CD8-positive, alpha-beta T cell (primary cell): ENCODE measurements at regions of chr12 and their contacts with region 1.

Region 1: GRCh38 chr12:1706633-1706981 is 15.7 kb downstream of the ADIPOR2 start:
- DNase-seq: no peak
- ATAC-seq: no peak
- H3K4me3 ChIP-seq: no peak overlapping the region
- H3K4me3 Mint-ChIP-seq: no peak overlapping the region
- H3K27ac ChIP-seq: no peak overlapping the region
- H3K27ac Mint-ChIP-seq: no peak overlapping the region
- H3K4me1 ChIP-seq: no peaks in the 10 kb centered on the region
- H3K4me1 Mint-ChIP-seq: peaks cover 70% of the 10 kb centered on the region
- H3K27me3 ChIP-seq: no peaks in the 10 kb centered on the region
- H3K27me3 Mint-ChIP-seq: no peaks in the 10 kb centered on the region
- CTCF ChIP-seq: no peak

Region 2: GRCh38 chr12:1744932-1745331 is 38.3 kb after region 1 on chr12:
- CTCF ChIA-PET with region 1: no interaction called
- POLR2A ChIA-PET with region 1: no interaction called
- intact Hi-C with region 1: loop called in 1 of 2 experiments (anchors 5 kb)
- DNase-seq: no peak
- ATAC-seq: no peak
- H3K4me3 ChIP-seq: no peak overlapping the region
- H3K4me3 Mint-ChIP-seq: no peak overlapping the region
- H3K27ac ChIP-seq: no peak overlapping the region
- H3K27ac Mint-ChIP-seq: no peak overlapping the region
- H3K4me1 ChIP-seq: peaks cover 15% of the 10 kb centered on the region
- H3K4me1 Mint-ChIP-seq: peaks cover 37% of the 10 kb centered on the region
- H3K27me3 ChIP-seq: no peaks in the 10 kb centered on the region
- H3K27me3 Mint-ChIP-seq: no peaks in the 10 kb centered on the region
- CTCF ChIP-seq: no peak

Region 3: DNA sequence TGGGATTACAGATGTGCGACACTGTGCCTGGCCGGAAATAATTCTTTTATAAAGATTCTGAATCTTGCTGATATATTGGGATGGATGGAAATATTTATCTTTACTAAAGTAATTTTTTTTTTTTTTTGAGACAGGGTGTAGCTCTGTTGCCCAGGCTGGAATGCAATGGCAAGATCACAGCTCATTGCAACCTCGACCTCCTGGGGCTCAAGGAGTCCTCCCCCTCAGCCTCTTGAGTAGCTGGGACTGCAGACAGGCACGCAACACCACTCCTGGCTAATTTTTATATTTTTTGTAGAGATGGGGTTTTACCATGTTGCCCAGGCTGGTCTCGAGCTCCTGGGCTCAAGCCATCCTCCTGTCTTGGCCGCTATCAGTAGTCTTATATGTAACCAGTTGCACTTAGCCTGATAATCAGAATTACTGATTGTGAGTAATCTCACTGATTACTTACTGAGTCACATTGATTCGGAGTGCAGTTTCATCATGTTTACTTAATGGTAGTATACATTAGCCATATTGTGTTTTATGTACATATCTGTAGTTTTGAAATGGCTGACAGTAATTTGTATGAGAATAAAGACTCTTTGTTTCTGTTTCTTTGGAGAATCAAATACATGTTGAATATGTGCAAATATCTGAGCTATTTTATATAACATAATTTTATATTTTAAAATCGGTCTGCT is 63.3 kb after region 1 on chr12:
- CTCF ChIA-PET with region 1: no interaction called
- POLR2A ChIA-PET with region 1: no interaction called
- intact Hi-C with region 1: loop called in 1 of 2 experiments (anchors 5 kb)
- DNase-seq: no peak
- ATAC-seq: no peak
- H3K4me3 ChIP-seq: no peak overlapping the region
- H3K4me3 Mint-ChIP-seq: no peak overlapping the region
- H3K27ac ChIP-seq: no peak overlapping the region
- H3K27ac Mint-ChIP-seq: no peak overlapping the region
- H3K4me1 ChIP-seq: no peaks in the 10 kb centered on the region
- H3K4me1 Mint-ChIP-seq: peaks cover 18% of the 10 kb centered on the region
- H3K27me3 ChIP-seq: no peaks in the 10 kb centered on the region
- H3K27me3 Mint-ChIP-seq: no peaks in the 10 kb centered on the region
- CTCF ChIP-seq: no peak